AG04450 (cell line): ENCODE measurements at regions of chr4 and their contacts with region 1.

Region 1: DNA sequence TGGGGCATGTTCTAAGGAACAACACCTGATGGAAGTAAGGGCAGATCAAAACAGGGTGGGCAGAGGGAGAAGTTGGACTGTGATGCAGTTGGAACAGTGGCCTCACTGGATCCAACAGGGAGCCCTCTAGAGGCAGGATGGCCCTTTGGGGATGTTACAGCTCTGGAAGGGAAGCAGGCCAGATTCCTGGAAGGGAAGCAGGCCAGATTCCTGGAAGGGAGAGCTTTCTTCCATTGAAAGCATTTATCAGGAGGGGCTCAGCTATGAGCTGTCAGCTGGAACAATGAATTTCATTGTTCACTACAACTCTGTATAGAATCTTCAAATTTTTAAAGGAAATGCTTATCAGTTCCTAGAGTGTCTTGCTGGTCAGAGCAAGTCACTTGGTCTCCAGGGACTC is 17.7 kb downstream of the IL15 start:
- DNase-seq: no peak
- H3K4me3 ChIP-seq: no peak overlapping the region
- H3K27ac ChIP-seq: no peak overlapping the region
- H3K27me3 ChIP-seq: no peaks in the 10 kb centered on the region
- CTCF ChIP-seq: peak; percentile 46

Region 2: DNA sequence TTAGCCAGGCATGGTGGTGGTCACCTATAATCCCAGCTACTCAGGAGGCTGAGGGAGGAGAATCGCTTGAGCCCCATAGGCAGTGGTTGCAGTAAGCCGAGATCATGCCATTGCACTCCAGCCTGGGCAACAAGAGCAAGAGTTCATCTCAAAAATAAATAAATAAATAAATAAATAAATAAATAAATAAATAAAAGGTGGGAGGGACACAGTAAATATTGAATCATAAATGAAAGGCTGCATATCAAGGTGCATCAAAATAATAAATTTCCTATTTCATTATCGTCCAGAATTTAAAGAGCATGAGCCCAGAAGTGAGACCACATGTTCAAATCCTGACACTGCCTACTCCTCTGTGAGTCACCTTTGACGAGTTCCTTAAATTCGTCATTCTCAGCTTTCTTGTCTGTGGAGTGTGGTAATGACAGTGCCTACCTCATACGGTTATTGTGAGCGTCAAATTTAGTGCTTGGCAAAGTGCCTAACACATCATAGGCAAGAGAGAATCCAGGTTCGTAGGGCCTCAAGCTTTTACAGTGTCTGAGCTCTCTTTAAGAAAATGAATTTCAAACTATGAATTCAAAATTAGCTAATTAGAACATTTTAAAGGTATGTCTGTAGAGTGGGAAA is 32.2 kb after region 1 on chr4:
- CTCF ChIA-PET with region 1: interaction called, 12 read pairs
- POLR2A ChIA-PET with region 1: no interaction called
- DNase-seq: no peak
- H3K4me3 ChIP-seq: no peak overlapping the region
- H3K27ac ChIP-seq: no peak overlapping the region
- H3K27me3 ChIP-seq: no peaks in the 10 kb centered on the region
- CTCF ChIP-seq: no peak